ENCODE measurements at regions of chr16 and their contacts with region 1.

Region 1: DNA sequence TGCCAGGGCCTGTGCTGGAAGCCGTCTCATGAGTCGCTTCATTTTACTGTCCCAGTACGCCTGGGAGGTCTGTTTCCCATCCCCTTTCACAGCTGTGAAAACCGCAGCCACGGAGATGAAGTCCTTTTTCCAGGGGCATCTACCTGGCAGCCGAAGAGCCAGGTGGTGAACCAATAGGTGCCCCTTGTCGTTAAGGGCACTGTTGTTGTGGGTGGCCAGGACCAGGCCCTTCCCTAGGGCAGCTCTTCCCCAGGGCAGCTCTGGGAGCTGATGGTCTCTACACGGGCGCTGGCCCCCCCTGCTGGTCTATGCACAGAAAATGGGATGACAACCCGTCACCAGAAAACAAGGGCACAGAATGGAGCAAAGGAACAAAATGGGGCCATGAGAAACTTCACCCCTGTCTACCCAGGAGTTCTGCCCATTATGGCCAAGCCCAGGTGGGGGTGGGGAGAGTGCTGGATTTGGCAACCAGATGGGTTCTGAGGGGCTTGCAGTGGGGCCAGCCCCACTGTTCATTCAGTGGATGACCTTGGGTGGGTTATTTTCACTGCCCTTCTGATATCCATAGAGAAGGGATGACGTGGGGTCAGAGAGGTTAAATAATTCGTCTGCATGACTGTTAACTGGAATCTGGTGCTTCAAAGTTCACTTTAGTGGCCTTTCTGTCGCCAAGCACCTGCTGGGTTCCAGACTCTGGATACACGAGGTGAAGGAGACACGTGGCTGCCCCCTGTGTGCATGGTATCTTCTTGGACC is 11.5 kb downstream of the RMI2 start:
- DNase-seq: peak; percentile 80
- ATAC-seq: peak; percentile 90
- H3K4me3 Mint-ChIP-seq: no peak overlapping the region
- H3K27ac Mint-ChIP-seq: no peak overlapping the region
- H3K4me1 Mint-ChIP-seq: peaks cover 58% of the 10 kb centered on the region
- H3K27me3 Mint-ChIP-seq: no peaks in the 10 kb centered on the region
- CTCF ChIP-seq: peak; percentile 38; the same call in 1 of the 2 replicates

Region 2: GRCh38 chr16:11312718-11313492 is 43.8 kb before region 1 on chr16:
- CTCF ChIA-PET with region 1: interaction called, 13 read pairs
- POLR2A ChIA-PET with region 1: no interaction called
- DNase-seq: peak; percentile 53
- ATAC-seq: peak; percentile 3; the same call in 1 of the 2 replicates
- H3K4me3 Mint-ChIP-seq: peak overlapping the region; percentile 50
- H3K27ac Mint-ChIP-seq: peak overlapping the region; percentile 98
- H3K4me1 Mint-ChIP-seq: peaks cover 71% of the 10 kb centered on the region
- H3K27me3 Mint-ChIP-seq: no peaks in the 10 kb centered on the region
- CTCF ChIP-seq: no peak

Region 3: DNA sequence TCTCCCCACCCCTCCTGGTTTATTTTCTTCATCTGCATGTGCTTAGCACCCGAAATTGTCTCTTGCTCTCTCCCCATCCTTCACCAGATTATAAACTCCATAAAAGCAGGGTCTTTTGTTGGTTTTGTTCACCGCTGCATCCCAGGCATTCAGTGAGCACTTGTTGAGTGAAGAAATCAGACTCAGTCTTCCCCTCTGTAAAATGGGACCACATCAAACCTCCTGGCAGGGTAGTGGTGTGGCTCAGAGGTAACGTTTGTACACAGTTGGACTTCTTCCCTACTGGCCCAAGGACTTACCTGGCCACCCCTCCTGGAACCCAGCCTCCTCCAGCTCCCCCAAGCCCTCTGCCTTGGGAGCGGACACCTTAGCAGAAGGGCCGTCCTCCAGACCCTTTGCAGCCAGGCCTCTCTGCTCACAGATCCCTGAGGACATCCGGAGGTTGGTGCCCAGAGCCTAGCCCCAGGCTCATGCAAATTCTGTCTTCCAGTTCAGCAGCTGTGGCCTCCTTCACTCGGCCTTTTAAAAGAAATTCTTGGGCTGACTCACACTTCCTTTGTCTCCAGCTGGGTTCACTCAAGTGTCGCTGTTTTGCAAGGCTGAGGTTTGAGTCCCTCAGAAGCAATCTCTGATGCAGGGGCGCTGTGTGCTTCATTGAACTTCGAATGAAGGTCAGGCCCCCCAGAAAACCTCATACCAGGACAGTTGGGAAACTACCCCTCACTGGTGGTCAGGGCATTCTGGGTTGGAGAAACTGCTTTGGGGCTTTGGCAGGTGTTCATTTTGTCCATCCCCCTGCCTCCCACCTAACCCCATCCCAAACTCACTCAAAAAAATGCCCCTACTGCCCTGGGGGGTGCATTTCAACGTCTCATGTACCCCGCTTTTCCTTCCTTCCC is 28.3 kb before region 1 on chr16:
- CTCF ChIA-PET with region 1: interaction called, 15 read pairs
- POLR2A ChIA-PET with region 1: interaction called, 3 read pairs
- DNase-seq: peak; percentile 79
- ATAC-seq: peak; percentile 89
- H3K4me3 Mint-ChIP-seq: peak overlapping the region; percentile 58
- H3K27ac Mint-ChIP-seq: peak overlapping the region; percentile 100
- H3K4me1 Mint-ChIP-seq: peaks cover 62% of the 10 kb centered on the region
- H3K27me3 Mint-ChIP-seq: no peaks in the 10 kb centered on the region
- CTCF ChIP-seq: no peak

Region 4: GRCh38 chr16:11345040-11345862 is 11.5 kb before region 1 on chr16 and contains the start of gene RMI2:
- CTCF ChIA-PET with region 1: interaction called, 10 read pairs
- POLR2A ChIA-PET with region 1: interaction called, 3 read pairs
- DNase-seq: peak; percentile 98
- ATAC-seq: peak; percentile 93
- H3K4me3 Mint-ChIP-seq: peak within 1 kb of the TSS; percentile 91
- H3K27ac Mint-ChIP-seq: peak within 1 kb of the TSS; percentile 98
- H3K4me1 Mint-ChIP-seq: peaks cover 66% of the 10 kb centered on the region
- H3K27me3 Mint-ChIP-seq: no peaks in the 10 kb centered on the region
- CTCF ChIP-seq: no peak
- total RNA-seq, gene RMI2: 77.2 to 83.4 TPM (median 79.0 TPM) in 3 replicates